Activated CD4-positive, alpha-beta memory T cell treated with anti-CD3 and anti-CD28 coated beads for 36 hours (primary cell): ENCODE measurements at regions of chr2 and their contacts with region 1.

Region 1: DNA sequence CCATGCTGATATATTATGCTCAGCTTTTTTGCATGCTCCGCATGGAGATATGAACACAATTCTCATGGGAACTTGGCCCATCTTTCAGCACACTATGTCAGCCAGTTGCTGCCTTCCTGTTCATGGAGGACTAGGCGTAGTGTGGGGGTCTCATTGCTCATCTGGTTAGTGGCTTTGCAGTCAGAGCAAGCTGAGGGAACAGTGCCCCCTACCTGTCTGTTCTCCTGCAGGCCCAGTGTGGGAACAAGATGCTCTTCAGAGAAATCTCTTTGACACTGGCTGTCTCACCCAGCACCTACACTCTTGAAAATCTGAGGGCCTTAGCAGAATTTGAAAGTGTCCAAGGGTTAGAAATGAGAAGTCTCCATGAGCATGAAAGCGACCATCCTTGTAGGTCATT is 47.1 kb downstream of the SPTBN1 start:
- DNase-seq: peak; percentile 50
- H3K4me3 Mint-ChIP-seq: no peak overlapping the region
- H3K27ac Mint-ChIP-seq: no peak overlapping the region
- H3K4me1 Mint-ChIP-seq: no peaks in the 10 kb centered on the region
- H3K27me3 Mint-ChIP-seq: no peaks in the 10 kb centered on the region

Region 2: GRCh38 chr2:54106631-54107454 is 396.3 kb before region 1 on chr2:
- CTCF ChIA-PET with region 1: interaction called, 20 read pairs
- POLR2A ChIA-PET with region 1: no interaction called
- intact Hi-C with region 1: loop called (anchors 5 kb)
- DNase-seq: peak; percentile 58
- H3K4me3 Mint-ChIP-seq: no peak overlapping the region
- H3K27ac Mint-ChIP-seq: no peak overlapping the region
- H3K4me1 Mint-ChIP-seq: peaks cover 5% of the 10 kb centered on the region
- H3K27me3 Mint-ChIP-seq: no peaks in the 10 kb centered on the region